Activated naive CD4-positive, alpha-beta T cell treated with anti-CD3 and anti-CD28 coated beads for 36 hours (primary cell): ENCODE measurements at regions of chr13 and their contacts with region 1.

Region 1: GRCh38 chr13:114065141-114065925 is 67.1 kb downstream of the RASA3 start:
- DNase-seq: peak; percentile 90
- H3K4me3 Mint-ChIP-seq: peak overlapping the region; percentile 67
- H3K27ac Mint-ChIP-seq: peak overlapping the region; percentile 95
- H3K4me1 Mint-ChIP-seq: peaks cover 67% of the 10 kb centered on the region
- H3K27me3 Mint-ChIP-seq: no peaks in the 10 kb centered on the region

Region 2: DNA sequence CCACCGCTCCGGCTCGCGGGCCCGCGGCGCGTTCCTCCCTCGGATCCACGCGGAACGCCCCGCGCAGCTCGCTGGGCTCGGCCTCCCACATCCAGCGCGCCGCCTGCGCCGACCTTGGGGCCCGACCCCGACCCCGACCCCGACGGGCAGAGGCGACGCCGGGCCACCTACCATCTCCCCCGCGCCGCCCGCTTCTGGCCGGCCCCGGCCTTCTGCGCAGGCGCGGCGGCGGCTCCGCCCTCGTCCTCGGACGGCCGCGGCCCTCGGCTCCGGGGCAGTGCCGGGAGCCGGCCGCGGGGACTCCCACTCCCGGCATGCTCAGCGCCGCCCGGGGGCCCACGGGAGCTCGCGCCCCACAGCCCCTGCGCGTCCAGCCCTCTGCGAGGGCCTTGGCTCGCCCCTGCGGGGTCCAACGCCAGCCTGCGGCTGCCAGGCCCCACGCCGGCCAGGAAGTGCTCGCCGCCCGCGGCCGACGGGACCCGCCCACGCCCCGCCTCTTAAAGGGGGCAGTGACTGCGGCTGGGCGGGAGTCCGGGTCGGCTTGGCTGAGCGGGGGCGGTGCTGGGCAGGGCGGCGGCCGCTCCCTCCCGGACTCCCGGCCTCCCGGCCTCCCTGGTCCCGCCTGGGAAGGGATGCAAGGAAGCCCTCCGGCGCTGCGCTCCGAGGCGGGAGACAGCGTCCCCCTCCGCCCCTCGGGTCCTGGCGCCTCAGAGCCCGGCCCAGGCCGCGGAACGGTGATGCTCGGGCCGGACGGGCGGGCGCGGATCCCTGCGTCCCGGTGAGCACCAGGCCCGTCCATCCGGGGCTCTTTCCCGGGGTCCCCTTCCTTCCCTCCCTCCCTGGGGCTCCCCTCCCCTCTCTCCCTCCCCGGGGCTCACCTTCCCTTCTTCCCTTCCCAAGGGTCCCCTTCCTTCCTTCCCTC is 574.6 kb before region 1 on chr13 and contains the start of gene DCUN1D2:
- CTCF ChIA-PET with region 1: no interaction called
- intact Hi-C with region 1: loop called (anchors 5 kb)
- DNase-seq: peak; percentile 70
- H3K4me3 Mint-ChIP-seq: peak within 1 kb of the TSS; percentile 96
- H3K27ac Mint-ChIP-seq: peak within 1 kb of the TSS; percentile 85
- H3K4me1 Mint-ChIP-seq: peaks cover 64% of the 10 kb centered on the region
- H3K27me3 Mint-ChIP-seq: no peaks in the 10 kb centered on the region
- total RNA-seq, gene DCUN1D2: 14.3 to 14.7 TPM

Region 3: DNA sequence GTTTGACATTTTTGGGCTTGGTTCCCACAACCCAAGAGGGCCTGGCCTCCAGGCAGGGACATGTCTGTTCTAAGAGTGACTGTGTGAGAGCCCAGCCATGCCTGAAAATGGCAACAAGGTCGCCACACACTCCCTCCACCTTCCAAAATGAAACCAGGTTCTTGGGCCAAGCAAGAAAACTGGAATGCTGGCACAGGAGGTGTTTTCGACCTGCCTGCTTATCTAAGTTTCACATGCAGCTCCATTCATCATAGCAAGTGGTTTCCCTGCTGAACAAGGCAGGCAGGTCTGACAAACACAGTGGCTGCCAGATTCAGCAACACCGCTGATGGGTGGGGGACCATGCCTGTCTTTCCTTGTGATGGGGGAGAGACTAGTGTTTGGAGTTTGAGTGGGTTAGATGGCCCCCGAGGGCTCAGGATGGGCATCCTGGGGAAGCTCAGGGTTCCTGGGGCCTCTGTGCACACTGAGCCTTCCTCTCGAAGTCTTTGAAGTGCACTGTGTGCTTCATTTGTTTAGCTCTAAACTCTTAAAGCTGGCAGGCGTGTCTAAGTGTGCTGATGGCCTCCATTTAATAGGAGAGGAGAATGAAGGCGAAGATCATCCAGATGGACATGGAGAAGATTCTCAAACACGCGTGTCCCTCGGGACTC is 183.6 kb before region 1 on chr13:
- CTCF ChIA-PET with region 1: no interaction called
- intact Hi-C with region 1: no loop called
- DNase-seq: peak; percentile 18
- H3K4me3 Mint-ChIP-seq: no peak overlapping the region
- H3K27ac Mint-ChIP-seq: no peak overlapping the region
- H3K4me1 Mint-ChIP-seq: peaks cover 23% of the 10 kb centered on the region
- H3K27me3 Mint-ChIP-seq: no peaks in the 10 kb centered on the region

Region 4: GRCh38 chr13:114049026-114049425 is 16.3 kb before region 1 on chr13:
- CTCF ChIA-PET with region 1: interaction called, 3 read pairs
- intact Hi-C with region 1: loop called (anchors 1 kb)
- DNase-seq: peak; percentile 83
- H3K4me3 Mint-ChIP-seq: peak overlapping the region; percentile 53
- H3K27ac Mint-ChIP-seq: peak overlapping the region; percentile 86
- H3K4me1 Mint-ChIP-seq: peaks cover 69% of the 10 kb centered on the region
- H3K27me3 Mint-ChIP-seq: no peaks in the 10 kb centered on the region

Region 5: GRCh38 chr13:114128624-114129522 is 63.5 kb after region 1 on chr13:
- CTCF ChIA-PET with region 1: interaction called, 4 read pairs
- intact Hi-C with region 1: loop called (anchors 1 kb)
- DNase-seq: peak; percentile 96
- H3K4me3 Mint-ChIP-seq: peak overlapping the region; percentile 97
- H3K27ac Mint-ChIP-seq: peak overlapping the region; percentile 93
- H3K4me1 Mint-ChIP-seq: peaks cover 57% of the 10 kb centered on the region
- H3K27me3 Mint-ChIP-seq: no peaks in the 10 kb centered on the region

Region 6: DNA sequence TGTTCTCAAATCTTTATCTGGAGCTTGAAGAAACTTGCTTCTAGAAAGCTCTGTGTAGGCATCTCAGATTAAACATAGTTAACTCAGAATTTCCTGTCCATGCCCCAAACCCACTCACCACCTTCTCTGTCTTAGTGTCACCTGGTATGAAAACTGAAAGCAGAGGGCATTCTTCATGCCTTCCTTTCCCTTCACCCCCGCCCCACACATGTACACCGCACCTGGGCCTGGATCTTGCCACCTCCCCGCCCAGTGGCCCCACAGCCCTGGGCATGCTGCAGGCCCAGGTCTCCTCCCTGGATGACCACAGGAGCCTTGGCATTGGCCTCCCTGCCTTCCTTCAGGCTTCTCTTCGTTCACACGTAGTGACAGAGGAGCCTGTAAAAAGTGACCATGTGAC is 129.5 kb after region 1 on chr13:
- CTCF ChIA-PET with region 1: no interaction called
- intact Hi-C with region 1: no loop called
- DNase-seq: peak; percentile 41
- H3K4me3 Mint-ChIP-seq: no peak overlapping the region
- H3K27ac Mint-ChIP-seq: peak overlapping the region; percentile 23
- H3K4me1 Mint-ChIP-seq: peaks cover 14% of the 10 kb centered on the region
- H3K27me3 Mint-ChIP-seq: no peaks in the 10 kb centered on the region

Region 7: DNA sequence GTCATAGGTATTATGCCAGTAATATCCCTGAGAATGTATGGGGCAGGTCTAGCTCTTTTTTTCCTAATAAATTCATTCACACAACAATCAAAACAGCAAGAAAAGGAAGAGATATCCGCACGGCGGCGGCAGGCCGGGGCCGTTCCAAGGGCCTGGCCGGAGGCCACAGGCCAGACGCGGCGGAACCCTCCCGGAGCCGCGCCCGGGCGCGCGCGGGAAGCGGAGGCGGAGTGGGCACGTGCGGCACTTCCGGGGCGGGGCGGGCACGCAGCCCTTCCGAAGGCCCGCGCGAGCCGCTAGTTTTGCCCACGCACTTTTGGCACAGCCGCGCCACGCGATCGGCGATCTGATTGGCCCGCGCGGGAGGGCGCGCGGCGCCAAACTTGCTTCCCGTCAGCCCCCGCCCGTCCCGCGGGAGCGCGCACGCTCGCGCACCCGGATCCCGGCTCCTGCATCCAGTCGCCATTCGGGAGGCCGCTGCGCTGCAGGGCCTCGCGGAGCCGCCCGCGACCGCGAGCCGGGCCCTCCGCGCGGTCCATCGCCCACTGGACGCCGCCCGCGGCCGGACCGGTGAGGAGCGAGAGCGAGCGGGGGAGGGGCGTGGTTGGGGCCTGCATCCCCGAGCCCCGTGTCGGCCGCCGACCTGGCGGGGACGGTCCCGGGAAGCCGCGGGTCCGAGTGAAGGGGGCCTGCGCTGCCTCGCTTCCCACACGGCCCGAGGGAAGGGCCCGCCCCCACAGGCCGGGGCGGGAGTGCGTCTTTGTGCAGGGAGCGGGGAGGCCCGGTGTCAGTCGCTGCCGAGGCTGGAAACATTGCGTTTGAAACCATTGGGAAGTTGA is 249.0 kb after region 1 on chr13 and contains the start of gene CHAMP1:
- CTCF ChIA-PET with region 1: no interaction called
- intact Hi-C with region 1: loop called (anchors 1 kb)
- DNase-seq: peak; percentile 95
- H3K4me3 Mint-ChIP-seq: peak within 1 kb of the TSS; percentile 84
- H3K27ac Mint-ChIP-seq: peak within 1 kb of the TSS; percentile 100
- H3K4me1 Mint-ChIP-seq: peaks cover 49% of the 10 kb centered on the region
- H3K27me3 Mint-ChIP-seq: no peaks in the 10 kb centered on the region
- total RNA-seq, gene CHAMP1: 50.6 to 52.6 TPM